ENCODE measurements at regions of chr2 and their contacts with region 1.

Region 1: DNA sequence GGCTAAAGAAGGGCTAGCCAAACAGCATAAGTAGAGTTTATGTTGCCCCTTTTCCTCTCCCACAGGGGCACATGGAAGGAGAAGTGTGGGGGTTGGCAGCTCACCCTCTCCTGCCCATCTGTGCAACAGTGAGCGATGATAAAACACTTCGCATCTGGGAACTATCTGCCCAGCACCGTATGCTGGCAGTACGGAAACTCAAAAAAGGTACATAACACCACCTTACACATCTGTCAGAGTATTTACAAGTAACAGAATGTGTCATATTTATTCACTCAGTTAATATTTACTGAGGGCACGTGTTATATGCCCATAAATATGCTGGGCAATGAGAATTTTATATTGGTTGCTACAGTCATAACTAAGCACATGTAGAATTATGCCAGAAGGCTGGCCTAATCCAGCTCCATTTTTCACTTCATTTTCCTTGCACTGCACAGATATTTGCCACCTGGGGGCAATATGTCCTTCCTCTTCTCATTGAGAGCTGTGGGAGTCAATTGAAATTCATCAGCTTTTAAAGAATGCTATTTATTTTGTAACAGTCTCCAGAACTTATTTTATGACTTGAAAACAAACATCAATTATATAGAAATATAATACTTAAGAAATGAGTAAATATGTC is 150.6 kb downstream of the RTN4 start:
- DNase-seq: no peak
- ATAC-seq: peak; percentile 89

Region 2: GRCh38 chr2:54952978-54953545 is 53.4 kb after region 1 on chr2:
- intact Hi-C with region 1: no loop called
- DNase-seq: no peak
- ATAC-seq: no peak

Region 3: DNA sequence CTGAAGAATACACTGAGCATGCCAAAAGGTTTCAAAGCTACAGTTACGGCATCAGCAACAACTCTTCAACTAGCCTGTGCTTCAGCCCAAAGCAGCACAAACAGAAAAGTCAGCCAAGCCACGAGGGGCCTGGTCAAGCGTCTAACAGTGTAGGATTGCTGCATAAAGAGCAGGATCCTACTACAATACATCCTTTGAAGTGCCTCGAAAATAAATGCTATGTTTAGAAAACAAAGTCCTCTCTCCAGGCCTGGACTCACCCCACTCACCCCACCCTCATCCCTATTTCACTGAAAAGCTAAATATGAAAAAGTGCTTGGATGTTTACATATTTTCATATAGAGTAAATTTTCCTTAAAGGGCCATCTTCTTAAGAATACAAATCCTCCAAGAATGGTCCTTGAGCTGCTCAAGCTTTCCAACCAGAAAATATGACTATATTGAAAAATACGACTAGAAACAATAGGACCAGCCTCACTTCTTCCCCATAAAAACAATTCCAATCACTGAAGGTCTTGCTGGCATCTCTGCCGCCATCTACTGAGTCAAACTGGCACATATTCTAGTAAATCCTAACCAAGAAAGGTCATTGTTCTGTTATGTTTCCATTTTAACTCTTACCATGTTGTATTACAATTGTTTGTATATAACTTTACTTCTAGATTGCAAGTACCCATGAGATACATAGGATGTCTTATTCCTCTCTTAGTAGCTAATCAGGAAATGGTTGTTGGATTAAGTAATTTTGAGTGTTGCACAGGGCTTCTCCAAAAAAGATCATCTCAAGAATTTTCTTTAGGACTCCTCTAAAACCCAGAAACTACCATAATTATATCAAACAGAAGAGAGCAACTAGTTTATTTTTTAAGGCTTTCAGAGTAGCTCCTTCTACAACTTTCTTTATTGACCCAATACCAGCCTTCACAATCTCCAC is 268.8 kb after region 1 on chr2:
- intact Hi-C with region 1: loop called (anchors 10 kb)
- DNase-seq: peak; percentile 75
- ATAC-seq: peak; percentile 88